ENCODE measurements at regions of chr1 and their contacts with region 1.

Region 1: DNA sequence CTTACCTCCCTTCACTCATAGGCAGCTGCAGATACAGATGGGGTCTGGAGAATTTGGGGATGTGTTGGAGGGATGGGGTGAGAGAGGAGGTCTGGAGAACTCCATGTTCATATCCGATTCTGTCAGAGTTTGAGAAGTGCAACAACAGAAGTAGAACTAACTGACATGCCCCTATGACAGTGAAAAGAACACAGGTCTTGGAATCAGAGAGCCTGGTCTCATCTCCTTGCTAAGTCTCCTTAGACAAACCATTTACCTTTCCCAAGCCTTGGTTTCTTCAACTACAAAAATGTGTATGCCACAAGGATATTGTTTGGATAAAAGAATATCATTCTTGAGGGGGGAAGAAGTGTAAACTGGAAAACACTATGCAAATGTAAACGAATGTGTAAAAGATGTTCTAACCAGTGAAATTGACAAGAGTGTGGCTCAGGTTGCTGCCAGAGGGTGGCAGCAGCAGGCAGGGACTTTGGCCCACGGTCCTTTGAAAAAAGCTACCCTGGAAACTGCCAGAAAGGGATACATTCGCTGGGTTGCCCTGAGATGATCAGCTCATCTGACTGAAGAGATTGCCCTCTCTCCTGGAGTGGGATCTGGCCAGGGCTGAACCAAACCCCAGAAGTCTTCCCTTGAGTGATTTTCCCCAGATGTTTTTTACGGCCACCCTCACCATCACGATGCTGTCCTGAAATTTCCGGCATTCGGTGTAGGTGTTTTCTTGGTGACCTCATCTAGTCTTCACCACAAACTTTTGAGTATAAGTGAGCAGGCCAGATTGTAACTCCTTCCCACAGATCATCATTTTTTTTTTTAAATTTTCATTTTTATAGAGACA is 17.0 kb upstream of the CD2 start:
- DNase-seq: peak; percentile 60 to 89 (median 75)
- ATAC-seq: peak; percentile 60
- H3K4me3 ChIP-seq: peak overlapping the region; percentile 23 to 25
- H3K4me3 Mint-ChIP-seq: peak overlapping the region; percentile 67
- H3K27ac ChIP-seq: peak overlapping the region; percentile 59 to 92
- H3K27ac Mint-ChIP-seq: peak overlapping the region; percentile 96
- H3K4me1 ChIP-seq: peaks cover 30% of the 10 kb centered on the region
- H3K4me1 Mint-ChIP-seq: peaks cover 44% of the 10 kb centered on the region
- H3K27me3 ChIP-seq: no peaks in the 10 kb centered on the region
- H3K27me3 Mint-ChIP-seq: no peaks in the 10 kb centered on the region
- CTCF ChIP-seq: peak; percentile 87

Region 2: DNA sequence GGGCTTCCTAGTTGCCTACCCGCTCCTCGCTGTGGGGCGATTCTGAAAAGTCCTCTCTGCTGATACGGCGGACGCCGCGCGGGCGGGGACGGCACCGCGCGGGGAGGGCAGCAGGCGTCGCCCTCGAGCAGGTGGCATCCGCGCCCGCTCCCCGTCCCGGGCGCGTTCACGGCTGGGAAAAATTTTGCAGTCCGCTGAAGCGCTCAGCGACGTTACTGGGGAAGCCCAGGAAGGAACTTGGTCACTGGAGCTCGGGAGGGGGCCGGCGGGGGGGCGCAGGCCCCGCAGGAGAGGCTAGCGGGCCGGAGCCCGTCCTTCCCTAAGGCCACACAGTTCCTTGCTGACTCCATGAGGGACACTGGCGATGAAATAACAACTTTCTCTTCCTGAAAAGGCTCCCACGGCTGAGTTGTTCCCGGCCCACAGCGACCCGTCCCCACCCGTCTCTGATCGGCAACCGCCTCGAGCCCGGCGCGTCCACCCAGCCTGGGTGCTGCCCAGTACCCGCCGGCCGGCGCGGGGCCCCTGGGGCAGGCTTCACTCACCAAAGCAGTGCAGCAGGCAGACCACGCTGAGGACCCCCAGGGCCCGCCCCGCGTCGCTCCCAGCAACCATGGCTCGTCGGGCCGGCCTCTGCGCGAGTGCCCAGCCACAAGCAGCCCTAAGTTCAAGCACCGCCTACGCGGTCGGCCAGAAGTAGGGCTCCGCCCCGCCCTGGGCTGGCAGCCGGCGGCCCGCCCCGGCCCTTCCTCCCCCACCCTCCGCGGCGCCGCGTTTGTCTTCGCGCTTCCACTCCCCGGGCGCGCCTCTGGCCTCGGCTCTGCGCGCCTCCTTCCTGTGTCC is 166.7 kb before region 1 on chr1 and contains the start of gene CD58:
- CTCF ChIA-PET with region 1: no interaction called
- POLR2A ChIA-PET with region 1: no interaction called
- intact Hi-C with region 1: loop called in 1 of 2 experiments (anchors 5 kb)
- DNase-seq: peak; percentile 53 to 89 (median 76)
- ATAC-seq: peak; percentile 75
- H3K4me3 ChIP-seq: peak within 1 kb of the TSS; percentile 88 to 95
- H3K4me3 Mint-ChIP-seq: peak within 1 kb of the TSS; percentile 92
- H3K27ac ChIP-seq: peak within 1 kb of the TSS; percentile 62 to 89
- H3K27ac Mint-ChIP-seq: peak within 1 kb of the TSS; percentile 92
- H3K4me1 ChIP-seq: peaks cover 3% of the 10 kb centered on the region
- H3K4me1 Mint-ChIP-seq: peaks cover 38% of the 10 kb centered on the region
- H3K27me3 ChIP-seq: no peaks in the 10 kb centered on the region
- H3K27me3 Mint-ChIP-seq: no peaks in the 10 kb centered on the region
- CTCF ChIP-seq: peak; percentile 73
- total RNA-seq, gene CD58: 5.4 to 6.6 TPM

Region 3: DNA sequence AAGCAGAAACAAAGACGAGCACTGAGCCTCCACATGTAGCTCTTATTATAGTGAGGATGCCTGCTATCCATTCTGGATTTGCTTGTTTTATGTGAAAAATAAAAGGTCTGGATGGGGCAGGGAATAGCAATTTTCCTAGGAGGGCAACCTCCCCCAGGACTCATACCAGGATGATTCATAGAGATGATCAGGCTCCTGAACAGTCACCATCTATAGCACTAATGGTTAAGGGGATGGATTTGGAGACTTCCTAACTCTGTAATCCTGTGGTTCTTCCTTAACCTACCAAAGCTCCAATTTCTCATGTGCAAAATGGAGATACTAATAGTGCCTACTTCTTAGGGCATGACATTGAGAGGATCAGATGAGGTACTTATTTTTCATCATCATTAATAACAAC is 131.9 kb before region 1 on chr1:
- CTCF ChIA-PET with region 1: no interaction called
- POLR2A ChIA-PET with region 1: no interaction called
- intact Hi-C with region 1: no loop called
- DNase-seq: no peak
- ATAC-seq: no peak
- H3K4me3 ChIP-seq: no peak overlapping the region
- H3K4me3 Mint-ChIP-seq: no peak overlapping the region
- H3K27ac ChIP-seq: no peak overlapping the region
- H3K27ac Mint-ChIP-seq: no peak overlapping the region
- H3K4me1 ChIP-seq: no peaks in the 10 kb centered on the region
- H3K4me1 Mint-ChIP-seq: peaks cover 4% of the 10 kb centered on the region
- H3K27me3 ChIP-seq: no peaks in the 10 kb centered on the region
- H3K27me3 Mint-ChIP-seq: peaks cover 2% of the 10 kb centered on the region
- CTCF ChIP-seq: no peak

Region 4: GRCh38 chr1:116754198-116754977 is 17.2 kb after region 1 on chr1 and contains the start of gene CD2:
- CTCF ChIA-PET with region 1: interaction called, 48 read pairs
- POLR2A ChIA-PET with region 1: interaction called, 45 read pairs
- intact Hi-C with region 1: loop called (anchors 1 to 2 kb)
- DNase-seq: peak in 6 of 9 experiments; percentile 43 to 80 (median 60)
- ATAC-seq: peak; percentile 83
- H3K4me3 ChIP-seq: peak within 1 kb of the TSS; percentile 71 to 84
- H3K4me3 Mint-ChIP-seq: peak within 1 kb of the TSS; percentile 93
- H3K27ac ChIP-seq: peak within 1 kb of the TSS; percentile 70 to 87
- H3K27ac Mint-ChIP-seq: peak within 1 kb of the TSS; percentile 99
- H3K4me1 ChIP-seq: peaks cover 23% of the 10 kb centered on the region
- H3K4me1 Mint-ChIP-seq: peaks cover 40% of the 10 kb centered on the region
- H3K27me3 ChIP-seq: no peaks in the 10 kb centered on the region
- H3K27me3 Mint-ChIP-seq: no peaks in the 10 kb centered on the region
- CTCF ChIP-seq: no peak
- total RNA-seq, gene CD2: 97.8 to 102 TPM

Region 5: GRCh38 chr1:116806245-116806644 is 69.0 kb after region 1 on chr1:
- CTCF ChIA-PET with region 1: interaction called, 11 read pairs
- POLR2A ChIA-PET with region 1: interaction called, 8 read pairs
- intact Hi-C with region 1: no loop called
- DNase-seq: peak in 7 of 9 experiments; percentile 37 to 85 (median 62)
- ATAC-seq: peak; percentile 37
- H3K4me3 ChIP-seq: peak overlapping the region in 1 of 2 experiments; percentile 47
- H3K4me3 Mint-ChIP-seq: peak overlapping the region; percentile 71
- H3K27ac ChIP-seq: peak overlapping the region in 1 of 2 experiments; percentile 87
- H3K27ac Mint-ChIP-seq: peak overlapping the region; percentile 94
- H3K4me1 ChIP-seq: peaks cover 52% of the 10 kb centered on the region
- H3K4me1 Mint-ChIP-seq: peaks cover 80% of the 10 kb centered on the region
- H3K27me3 ChIP-seq: no peaks in the 10 kb centered on the region
- H3K27me3 Mint-ChIP-seq: no peaks in the 10 kb centered on the region
- CTCF ChIP-seq: no peak

Region 6: GRCh38 chr1:116853670-116854402 is 116.6 kb after region 1 on chr1:
- CTCF ChIA-PET with region 1: interaction called, 19 read pairs
- POLR2A ChIA-PET with region 1: interaction called, 3 read pairs
- intact Hi-C with region 1: no loop called
- DNase-seq: no peak
- ATAC-seq: no peak
- H3K4me3 ChIP-seq: no peak overlapping the region
- H3K4me3 Mint-ChIP-seq: no peak overlapping the region
- H3K27ac ChIP-seq: no peak overlapping the region
- H3K27ac Mint-ChIP-seq: no peak overlapping the region
- H3K4me1 ChIP-seq: no peaks in the 10 kb centered on the region
- H3K4me1 Mint-ChIP-seq: peaks cover 8% of the 10 kb centered on the region
- H3K27me3 ChIP-seq: no peaks in the 10 kb centered on the region
- H3K27me3 Mint-ChIP-seq: no peaks in the 10 kb centered on the region
- CTCF ChIP-seq: no peak

Region 7: GRCh38 chr1:116987256-116987555 is 250.0 kb after region 1 on chr1:
- CTCF ChIA-PET with region 1: interaction called, 7 read pairs
- POLR2A ChIA-PET with region 1: interaction called, 5 read pairs
- intact Hi-C with region 1: loop called in 1 of 2 experiments (anchors 2 kb)
- DNase-seq: peak; percentile 43 to 83 (median 74)
- ATAC-seq: peak; percentile 91
- H3K4me3 ChIP-seq: peak overlapping the region; percentile 29 to 53
- H3K4me3 Mint-ChIP-seq: peak overlapping the region; percentile 85
- H3K27ac ChIP-seq: peak overlapping the region; percentile 49 to 85
- H3K27ac Mint-ChIP-seq: peak overlapping the region; percentile 98
- H3K4me1 ChIP-seq: peaks cover 52% of the 10 kb centered on the region
- H3K4me1 Mint-ChIP-seq: peaks cover 69% of the 10 kb centered on the region
- H3K27me3 ChIP-seq: no peaks in the 10 kb centered on the region
- H3K27me3 Mint-ChIP-seq: no peaks in the 10 kb centered on the region
- CTCF ChIP-seq: no peak

Region 8: GRCh38 chr1:117128323-117129079 is 391.3 kb after region 1 on chr1:
- CTCF ChIA-PET with region 1: interaction called, 4 read pairs
- POLR2A ChIA-PET with region 1: no interaction called
- intact Hi-C with region 1: loop called in 1 of 2 experiments (anchors 5 kb)
- DNase-seq: peak in 2 of 9 experiments; percentile 36 to 55
- ATAC-seq: peak; percentile 38
- H3K4me3 ChIP-seq: no peak overlapping the region
- H3K4me3 Mint-ChIP-seq: no peak overlapping the region
- H3K27ac ChIP-seq: no peak overlapping the region
- H3K27ac Mint-ChIP-seq: no peak overlapping the region
- H3K4me1 ChIP-seq: no peaks in the 10 kb centered on the region
- H3K4me1 Mint-ChIP-seq: peaks cover 2% of the 10 kb centered on the region
- H3K27me3 ChIP-seq: peaks cover 0 to 5% of the 10 kb centered on the region in 2 experiments
- H3K27me3 Mint-ChIP-seq: peaks cover 8% of the 10 kb centered on the region
- CTCF ChIP-seq: peak; percentile 54